CD8-positive, alpha-beta T cell (primary cell): ENCODE measurements at regions of chr4 and their contacts with region 1.

Region 1: GRCh38 chr4:183444214-183445066 is at the start of gene CDKN2AIP:
- DNase-seq: peak; percentile 90 to 98 (median 93)
- ATAC-seq: peak; percentile 85
- H3K4me3 ChIP-seq: peak within 1 kb of the TSS; percentile 84 to 92
- H3K4me3 Mint-ChIP-seq: peak within 1 kb of the TSS; percentile 98
- H3K27ac ChIP-seq: peak within 1 kb of the TSS; percentile 84 to 91
- H3K27ac Mint-ChIP-seq: peak within 1 kb of the TSS; percentile 99
- H3K4me1 ChIP-seq: peaks cover 43% of the 10 kb centered on the region
- H3K4me1 Mint-ChIP-seq: peaks cover 59% of the 10 kb centered on the region
- H3K27me3 ChIP-seq: no peaks in the 10 kb centered on the region
- H3K27me3 Mint-ChIP-seq: no peaks in the 10 kb centered on the region
- CTCF ChIP-seq: no peak
- total RNA-seq, gene CDKN2AIP: 51.2 to 51.9 TPM

Region 2: DNA sequence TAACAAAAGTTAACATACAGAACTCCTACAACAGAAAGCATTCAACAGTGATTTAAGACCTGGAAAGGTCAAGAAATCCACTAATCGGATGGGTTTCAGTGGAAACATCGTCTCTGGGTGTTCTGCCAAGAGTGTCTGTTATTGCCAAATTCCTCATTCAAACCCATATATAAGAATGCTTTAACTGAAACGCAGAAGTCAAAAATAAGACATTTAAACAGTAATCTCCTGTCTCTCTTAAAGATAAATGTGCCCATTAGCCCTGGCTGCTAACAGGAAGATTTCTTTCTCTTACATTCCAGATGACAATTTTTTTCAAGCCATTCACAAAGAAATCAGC is 558.7 kb before region 1 on chr4:
- CTCF ChIA-PET with region 1: no interaction called
- POLR2A ChIA-PET with region 1: no interaction called
- intact Hi-C with region 1: no loop called
- DNase-seq: no peak
- ATAC-seq: no peak
- H3K4me3 ChIP-seq: no peak overlapping the region
- H3K4me3 Mint-ChIP-seq: no peak overlapping the region
- H3K27ac ChIP-seq: no peak overlapping the region
- H3K27ac Mint-ChIP-seq: no peak overlapping the region
- H3K4me1 ChIP-seq: no peaks in the 10 kb centered on the region
- H3K4me1 Mint-ChIP-seq: no peaks in the 10 kb centered on the region
- H3K27me3 ChIP-seq: no peaks in the 10 kb centered on the region
- H3K27me3 Mint-ChIP-seq: no peaks in the 10 kb centered on the region
- CTCF ChIP-seq: no peak

Region 3: DNA sequence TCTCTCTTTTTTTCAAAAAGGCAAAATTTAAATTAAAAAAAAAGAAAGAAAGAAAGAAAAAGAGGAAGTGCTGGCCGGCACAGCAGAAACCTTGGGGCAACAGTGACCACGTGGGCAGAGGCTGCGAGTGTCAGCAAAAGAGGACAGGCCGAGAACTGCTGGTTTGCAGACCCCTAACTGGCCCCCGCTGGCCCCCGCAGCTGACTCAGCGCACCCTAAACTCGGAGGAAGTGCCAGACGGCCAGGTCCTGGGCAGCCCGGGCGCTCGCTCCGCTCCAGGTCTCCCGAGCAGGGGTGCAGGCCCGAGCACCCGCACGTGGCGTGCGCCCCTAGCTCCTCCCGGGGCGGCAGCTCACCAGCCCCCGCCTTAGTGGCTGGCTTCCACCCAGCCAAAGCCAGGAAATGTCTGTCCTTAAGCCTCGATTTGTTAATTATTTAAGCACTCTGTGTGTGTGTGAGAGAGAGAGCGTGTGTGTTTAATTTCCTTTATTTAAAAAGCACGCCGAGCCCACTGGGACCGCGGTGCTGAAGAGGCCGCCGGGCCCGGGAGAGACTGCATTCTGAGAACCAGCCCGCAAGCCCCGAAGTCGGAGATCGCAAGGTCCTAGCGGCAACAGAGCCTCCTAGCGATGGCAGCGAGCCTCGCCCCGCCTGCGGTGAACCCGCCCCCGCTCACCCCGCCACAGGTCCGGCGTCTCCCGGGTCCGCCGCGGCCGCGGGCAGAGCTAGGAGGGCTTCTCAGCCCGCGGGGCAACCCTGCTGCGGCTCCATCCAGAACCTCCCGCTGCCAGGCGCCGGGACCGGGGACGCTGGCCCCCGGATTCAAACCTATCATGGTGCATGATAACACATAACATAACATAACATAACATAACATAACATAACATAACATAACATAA is 46.0 kb before region 1 on chr4:
- CTCF ChIA-PET with region 1: interaction called, 3 read pairs
- POLR2A ChIA-PET with region 1: no interaction called
- intact Hi-C with region 1: loop called in 1 of 2 experiments (anchors 2 kb)
- DNase-seq: peak; percentile 31 to 78 (median 63)
- ATAC-seq: peak; percentile 91
- H3K4me3 ChIP-seq: peak overlapping the region; percentile 56 to 83
- H3K4me3 Mint-ChIP-seq: peak overlapping the region; percentile 85
- H3K27ac ChIP-seq: peak overlapping the region in 1 of 2 experiments; percentile 39
- H3K27ac Mint-ChIP-seq: peak overlapping the region; percentile 55
- H3K4me1 ChIP-seq: peaks cover 13% of the 10 kb centered on the region
- H3K4me1 Mint-ChIP-seq: peaks cover 18% of the 10 kb centered on the region
- H3K27me3 ChIP-seq: no peaks in the 10 kb centered on the region
- H3K27me3 Mint-ChIP-seq: peaks cover 2% of the 10 kb centered on the region
- CTCF ChIP-seq: no peak

Region 4: GRCh38 chr4:183430317-183430993 is 14.0 kb before region 1 on chr4:
- CTCF ChIA-PET with region 1: interaction called, 5 read pairs
- POLR2A ChIA-PET with region 1: interaction called, 15 read pairs
- intact Hi-C with region 1: loop called in 1 of 2 experiments (anchors 1 kb)
- DNase-seq: peak in 7 of 9 experiments; percentile 6 to 65 (median 32)
- ATAC-seq: peak; percentile 58
- H3K4me3 ChIP-seq: no peak overlapping the region
- H3K4me3 Mint-ChIP-seq: peak overlapping the region; percentile 69
- H3K27ac ChIP-seq: peak overlapping the region; percentile 2 to 6
- H3K27ac Mint-ChIP-seq: peak overlapping the region; percentile 88
- H3K4me1 ChIP-seq: peaks cover 27% of the 10 kb centered on the region
- H3K4me1 Mint-ChIP-seq: peaks cover 33% of the 10 kb centered on the region
- H3K27me3 ChIP-seq: no peaks in the 10 kb centered on the region
- H3K27me3 Mint-ChIP-seq: no peaks in the 10 kb centered on the region
- CTCF ChIP-seq: no peak

Region 5: DNA sequence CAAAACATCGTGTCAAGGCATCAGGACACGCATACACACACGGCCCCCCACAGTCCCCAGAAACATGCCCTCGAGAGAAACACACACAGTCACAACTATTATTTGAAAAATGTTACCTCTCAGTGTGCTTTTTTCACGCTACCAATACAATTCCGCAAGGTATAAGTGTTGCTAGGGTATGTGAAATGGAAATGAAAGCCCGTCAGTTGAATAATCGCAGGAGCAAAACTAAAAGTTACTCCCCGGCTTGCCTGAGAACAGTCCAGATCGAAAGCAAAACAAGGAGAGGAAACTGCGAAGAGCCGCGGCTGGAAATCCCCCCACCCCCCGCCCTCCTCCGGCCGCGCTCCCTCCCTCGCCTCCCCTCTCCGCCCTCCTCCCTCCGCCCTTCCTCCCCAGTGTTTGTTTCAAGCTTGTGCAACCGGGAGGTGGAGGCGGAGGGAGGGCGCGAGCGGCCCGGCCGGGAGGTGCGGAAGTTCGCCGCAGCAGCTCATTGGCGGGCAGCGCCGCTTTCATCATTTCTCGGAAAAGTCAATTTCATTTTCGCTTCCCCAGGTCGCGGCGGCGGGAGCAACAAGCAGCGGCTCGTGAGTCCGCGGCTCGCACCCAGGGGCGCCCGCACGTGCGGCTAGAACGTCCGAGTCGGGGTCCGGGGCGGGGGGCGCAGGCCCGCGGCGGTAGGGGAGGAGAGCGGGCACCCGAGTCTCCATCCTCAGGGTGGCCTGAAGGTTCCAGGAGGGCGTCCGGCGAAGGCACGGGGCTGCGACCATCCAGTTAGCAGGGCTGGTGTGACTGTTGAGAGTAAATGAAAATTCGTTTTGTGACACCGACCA is 1030.0 kb after region 1 on chr4 and contains the start of gene IRF2:
- CTCF ChIA-PET with region 1: interaction called, 3 read pairs
- POLR2A ChIA-PET with region 1: no interaction called
- intact Hi-C with region 1: loop called in 1 of 2 experiments (anchors 5 kb)
- DNase-seq: peak; percentile 91 to 99 (median 95)
- ATAC-seq: peak; percentile 82
- H3K4me3 ChIP-seq: peak within 1 kb of the TSS; percentile 78 to 93
- H3K4me3 Mint-ChIP-seq: peak within 1 kb of the TSS; percentile 98
- H3K27ac ChIP-seq: peak within 1 kb of the TSS; percentile 94 to 95
- H3K27ac Mint-ChIP-seq: peak within 1 kb of the TSS; percentile 99
- H3K4me1 ChIP-seq: peaks cover 38% of the 10 kb centered on the region
- H3K4me1 Mint-ChIP-seq: peaks cover 67% of the 10 kb centered on the region
- H3K27me3 ChIP-seq: no peaks in the 10 kb centered on the region
- H3K27me3 Mint-ChIP-seq: no peaks in the 10 kb centered on the region
- CTCF ChIP-seq: no peak
- total RNA-seq, gene IRF2: 7.9 to 9.3 TPM

Region 6: GRCh38 chr4:184733654-184734524 is 1289.4 kb after region 1 on chr4 and contains the start of gene CENPU:
- CTCF ChIA-PET with region 1: no interaction called
- POLR2A ChIA-PET with region 1: no interaction called
- intact Hi-C with region 1: loop called in 1 of 2 experiments (anchors 10 kb)
- DNase-seq: peak; percentile 87 to 97 (median 94)
- ATAC-seq: peak; percentile 95
- H3K4me3 ChIP-seq: peak within 1 kb of the TSS; percentile 74 to 79
- H3K4me3 Mint-ChIP-seq: peak within 1 kb of the TSS; percentile 87
- H3K27ac ChIP-seq: peak within 1 kb of the TSS; percentile 2 to 43
- H3K27ac Mint-ChIP-seq: peak within 1 kb of the TSS; percentile 84
- H3K4me1 ChIP-seq: peaks cover 8% of the 10 kb centered on the region
- H3K4me1 Mint-ChIP-seq: peaks cover 18% of the 10 kb centered on the region
- H3K27me3 ChIP-seq: no peaks in the 10 kb centered on the region
- H3K27me3 Mint-ChIP-seq: no peaks in the 10 kb centered on the region
- CTCF ChIP-seq: no peak
- total RNA-seq, gene CENPU: 3.4 TPM

Region 7: GRCh38 chr4:185425647-185426352 is 1981.4 kb after region 1 on chr4 and contains the start of gene UFSP2:
- CTCF ChIA-PET with region 1: no interaction called
- POLR2A ChIA-PET with region 1: no interaction called
- intact Hi-C with region 1: loop called in 1 of 2 experiments (anchors 10 kb)
- DNase-seq: peak; percentile 75 to 97 (median 89)
- ATAC-seq: peak; percentile 86
- H3K4me3 ChIP-seq: peak within 1 kb of the TSS; percentile 87 to 90
- H3K4me3 Mint-ChIP-seq: peak within 1 kb of the TSS; percentile 83
- H3K27ac ChIP-seq: peak within 1 kb of the TSS; percentile 97 to 99
- H3K27ac Mint-ChIP-seq: peak within 1 kb of the TSS; percentile 100
- H3K4me1 ChIP-seq: peaks cover 18% of the 10 kb centered on the region
- H3K4me1 Mint-ChIP-seq: peaks cover 36% of the 10 kb centered on the region
- H3K27me3 ChIP-seq: no peaks in the 10 kb centered on the region
- H3K27me3 Mint-ChIP-seq: peaks cover 5% of the 10 kb centered on the region
- CTCF ChIP-seq: no peak
- total RNA-seq, gene UFSP2: 13.4 to 17.4 TPM